Activated naive CD8-positive, alpha-beta T cell treated with anti-CD3 and anti-CD28 coated beads, Interleukin-2, amount 10 ng/mL, durations not matched to agents 7 days and 5 days (primary cell): ENCODE measurements at regions of chr6 and their contacts with region 1.

Region 1: GRCh38 chr6:42009966-42010891 is 40.1 kb upstream of the TAF8 start:
- DNase-seq: peak; percentile 58
- ATAC-seq: peak; percentile 74
- H3K4me3 Mint-ChIP-seq: peak overlapping the region; percentile 85
- H3K27ac Mint-ChIP-seq: peak overlapping the region; percentile 98
- H3K4me1 Mint-ChIP-seq: peaks cover 70% of the 10 kb centered on the region
- H3K27me3 Mint-ChIP-seq: no peaks in the 10 kb centered on the region

Region 2: DNA sequence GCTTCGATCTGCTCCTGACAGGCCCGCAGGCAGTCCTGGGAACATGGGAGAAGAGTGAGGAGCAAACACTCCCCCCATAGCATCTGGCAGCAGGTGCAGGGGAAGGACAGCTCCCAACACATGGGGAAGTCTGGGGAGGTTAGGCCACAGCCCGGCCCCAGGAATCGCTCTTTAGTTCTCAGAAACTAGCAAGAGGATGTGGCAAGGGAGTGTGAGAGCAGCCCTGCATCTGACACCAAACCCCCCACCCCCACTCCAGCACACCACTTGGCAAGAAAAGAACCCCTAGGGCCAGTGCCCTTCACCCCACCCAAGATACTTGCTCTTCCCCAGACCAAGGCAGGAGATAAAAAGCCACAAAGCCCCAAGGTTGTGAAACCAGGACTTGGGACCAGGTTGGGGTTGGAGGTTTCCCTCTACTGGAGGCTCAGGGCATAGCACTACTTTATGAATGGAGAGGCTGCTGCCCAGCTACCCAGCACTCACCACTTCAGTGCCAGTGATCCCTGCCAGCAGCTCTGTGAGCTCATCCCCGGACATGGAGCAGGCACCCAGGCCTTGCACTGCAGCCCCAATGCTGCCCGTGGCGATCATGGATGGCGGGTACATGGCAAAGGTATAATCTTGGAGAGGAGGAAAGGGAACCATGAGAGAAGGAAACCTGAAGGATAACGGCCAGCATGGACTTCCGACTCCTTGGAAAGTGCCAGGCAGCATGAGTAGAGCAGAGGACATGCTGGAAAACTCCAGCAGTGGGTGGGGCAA is 74.0 kb before region 1 on chr6:
- POLR2A ChIA-PET with region 1: interaction called, 38 read pairs
- DNase-seq: peak; percentile 80
- ATAC-seq: peak; percentile 76
- H3K4me3 Mint-ChIP-seq: peak overlapping the region; percentile 100
- H3K27ac Mint-ChIP-seq: peak overlapping the region; percentile 90
- H3K4me1 Mint-ChIP-seq: peaks cover 56% of the 10 kb centered on the region
- H3K27me3 Mint-ChIP-seq: no peaks in the 10 kb centered on the region

Region 3: DNA sequence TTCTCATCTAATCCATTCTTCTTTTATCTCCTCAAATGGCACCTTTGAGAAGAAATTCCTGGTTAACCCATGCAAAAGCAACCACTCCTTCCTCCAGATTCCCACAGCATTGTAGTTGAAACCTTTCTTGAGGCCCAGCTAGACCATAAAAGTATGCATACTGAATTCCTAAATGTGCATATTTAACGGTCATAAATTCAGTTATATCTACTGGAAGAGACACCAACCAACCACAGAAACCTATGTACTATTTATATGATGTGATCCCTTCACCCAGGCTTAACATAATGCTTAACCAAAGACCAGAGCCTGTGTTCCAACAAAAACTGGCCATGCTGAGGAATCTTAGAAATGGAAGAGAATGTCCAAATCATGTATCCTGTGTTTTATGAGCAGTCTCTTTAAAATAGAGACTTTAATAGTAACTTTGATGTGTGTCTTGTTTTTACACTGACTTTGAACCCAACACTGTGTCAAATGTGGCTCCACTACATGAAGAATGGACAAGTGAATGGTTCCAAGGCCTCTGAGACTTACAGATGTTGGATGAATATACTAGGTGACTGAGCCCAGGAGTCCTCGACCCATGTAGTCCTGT is 28.7 kb after region 1 on chr6:
- POLR2A ChIA-PET with region 1: interaction called, 11 read pairs
- DNase-seq: no peak
- ATAC-seq: no peak
- H3K4me3 Mint-ChIP-seq: peak overlapping the region; percentile 81
- H3K27ac Mint-ChIP-seq: peak overlapping the region; percentile 94
- H3K4me1 Mint-ChIP-seq: peaks cover 68% of the 10 kb centered on the region
- H3K27me3 Mint-ChIP-seq: no peaks in the 10 kb centered on the region